ENCODE measurements at regions of chr2 and their contacts with region 1.

Region 1: GRCh38 chr2:7825591-7826312 is 856.1 kb upstream of the ID2 start:
- DNase-seq: peak; percentile 86
- H3K4me3 Mint-ChIP-seq: no peak overlapping the region
- H3K27ac Mint-ChIP-seq: peak overlapping the region; percentile 86
- H3K4me1 Mint-ChIP-seq: peaks cover 16% of the 10 kb centered on the region
- H3K27me3 Mint-ChIP-seq: no peaks in the 10 kb centered on the region

Region 2: GRCh38 chr2:6917071-6917760 is 908.5 kb before region 1 on chr2 and contains the start of gene RNF144A:
- CTCF ChIA-PET with region 1: no interaction called
- intact Hi-C with region 1: loop called (anchors 2 kb)
- DNase-seq: peak; percentile 67
- H3K4me3 Mint-ChIP-seq: peak within 1 kb of the TSS; percentile 76
- H3K27ac Mint-ChIP-seq: peak within 1 kb of the TSS; percentile 85
- H3K4me1 Mint-ChIP-seq: peaks cover 75% of the 10 kb centered on the region
- H3K27me3 Mint-ChIP-seq: no peaks in the 10 kb centered on the region
- total RNA-seq, gene RNF144A: 49.0 to 50.6 TPM

Region 3: GRCh38 chr2:7567646-7568045 is 258.1 kb before region 1 on chr2:
- CTCF ChIA-PET with region 1: interaction called, 3 read pairs
- intact Hi-C with region 1: loop called (anchors 1 kb)
- DNase-seq: peak; percentile 82
- H3K4me3 Mint-ChIP-seq: peak overlapping the region; percentile 36
- H3K27ac Mint-ChIP-seq: peak overlapping the region; percentile 82
- H3K4me1 Mint-ChIP-seq: peaks cover 58% of the 10 kb centered on the region
- H3K27me3 Mint-ChIP-seq: no peaks in the 10 kb centered on the region

Region 4: GRCh38 chr2:7845332-7845731 is 19.6 kb after region 1 on chr2:
- CTCF ChIA-PET with region 1: interaction called, 5 read pairs
- intact Hi-C with region 1: loop called (anchors 1 kb)
- DNase-seq: no peak
- H3K4me3 Mint-ChIP-seq: no peak overlapping the region
- H3K27ac Mint-ChIP-seq: no peak overlapping the region
- H3K4me1 Mint-ChIP-seq: peaks cover 19% of the 10 kb centered on the region
- H3K27me3 Mint-ChIP-seq: peaks cover 5% of the 10 kb centered on the region

Region 5: DNA sequence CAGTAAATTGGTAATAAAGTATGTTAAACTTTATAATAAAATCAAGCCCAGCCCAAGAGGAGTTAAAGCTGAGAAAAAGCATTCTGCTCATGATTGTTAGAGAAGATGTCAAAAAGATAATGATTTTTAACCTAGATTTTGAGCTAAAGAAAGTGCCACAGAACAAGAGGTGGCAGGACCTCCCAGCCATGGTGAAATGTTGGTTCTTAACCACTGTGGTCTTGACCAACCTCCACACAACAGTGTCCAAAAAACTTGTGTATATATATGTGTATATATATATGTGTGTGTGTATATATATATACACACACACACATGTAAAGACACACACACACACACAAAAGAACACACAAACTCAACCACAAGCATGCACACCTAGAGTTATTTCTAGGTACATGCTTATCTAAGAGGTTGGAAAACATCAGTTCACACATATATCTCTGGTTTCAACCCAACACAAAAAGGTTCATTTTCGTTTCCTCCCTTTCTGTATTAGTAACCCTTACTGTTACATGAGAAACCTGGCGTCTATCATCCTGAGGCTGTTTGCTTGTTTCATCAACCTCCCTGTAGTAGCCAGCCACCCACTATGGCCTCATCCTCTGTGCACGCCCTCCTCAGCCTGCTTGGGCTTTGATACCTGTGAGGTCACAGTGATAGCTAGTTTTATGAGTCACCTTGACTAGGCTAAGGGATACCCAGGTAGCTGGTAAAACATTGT is 224.3 kb after region 1 on chr2:
- CTCF ChIA-PET with region 1: interaction called, 3 read pairs
- intact Hi-C with region 1: loop called (anchors 1 kb)
- DNase-seq: peak; percentile 80
- H3K4me3 Mint-ChIP-seq: no peak overlapping the region
- H3K27ac Mint-ChIP-seq: peak overlapping the region; percentile 68
- H3K4me1 Mint-ChIP-seq: peaks cover 18% of the 10 kb centered on the region
- H3K27me3 Mint-ChIP-seq: peaks cover 2% of the 10 kb centered on the region

Region 6: GRCh38 chr2:8103083-8103708 is 277.4 kb after region 1 on chr2:
- CTCF ChIA-PET with region 1: no interaction called
- intact Hi-C with region 1: no loop called
- DNase-seq: no peak
- H3K4me3 Mint-ChIP-seq: no peak overlapping the region
- H3K27ac Mint-ChIP-seq: no peak overlapping the region
- H3K4me1 Mint-ChIP-seq: no peaks in the 10 kb centered on the region
- H3K27me3 Mint-ChIP-seq: no peaks in the 10 kb centered on the region

Region 7: GRCh38 chr2:8477552-8478470 is 652.1 kb after region 1 on chr2:
- CTCF ChIA-PET with region 1: no interaction called
- intact Hi-C with region 1: loop called (anchors 5 kb)
- DNase-seq: peak; percentile 54
- H3K4me3 Mint-ChIP-seq: no peak overlapping the region
- H3K27ac Mint-ChIP-seq: peak overlapping the region; percentile 31
- H3K4me1 Mint-ChIP-seq: peaks cover 65% of the 10 kb centered on the region
- H3K27me3 Mint-ChIP-seq: no peaks in the 10 kb centered on the region